Spleen (tissue), 13 donors: ENCODE measurements at regions of chr10 and their contacts with region 1.

Region 1: GRCh38 chr10:28663576-28664313 is 13.6 kb upstream of the BAMBI start:
- DNase-seq: peak; percentile 90
- H3K4me3 ChIP-seq: no peak overlapping the region
- H3K27ac ChIP-seq: no peak overlapping the region
- H3K4me1 ChIP-seq: peaks cover 0 to 23% (median 12%) of the 10 kb centered on the region in 6 donors
- H3K27me3 ChIP-seq: peaks cover 0 to 49% (median 19%) of the 10 kb centered on the region in 7 donors
- CTCF ChIP-seq: peak; percentile 70 to 97 (median 91)
- POLR2A ChIP-seq: no peak

Region 2: GRCh38 chr10:28875549-28876081 is 211.9 kb after region 1 on chr10:
- intact Hi-C with region 1: no loop called
- DNase-seq: no peak
- H3K4me3 ChIP-seq: no peak overlapping the region
- H3K27ac ChIP-seq: no peak overlapping the region
- H3K4me1 ChIP-seq: peaks cover 0 to 10% (median 5%) of the 10 kb centered on the region in 6 donors
- H3K27me3 ChIP-seq: no peaks in the 10 kb centered on the region
- CTCF ChIP-seq: no peak
- POLR2A ChIP-seq: no peak

Region 3: DNA sequence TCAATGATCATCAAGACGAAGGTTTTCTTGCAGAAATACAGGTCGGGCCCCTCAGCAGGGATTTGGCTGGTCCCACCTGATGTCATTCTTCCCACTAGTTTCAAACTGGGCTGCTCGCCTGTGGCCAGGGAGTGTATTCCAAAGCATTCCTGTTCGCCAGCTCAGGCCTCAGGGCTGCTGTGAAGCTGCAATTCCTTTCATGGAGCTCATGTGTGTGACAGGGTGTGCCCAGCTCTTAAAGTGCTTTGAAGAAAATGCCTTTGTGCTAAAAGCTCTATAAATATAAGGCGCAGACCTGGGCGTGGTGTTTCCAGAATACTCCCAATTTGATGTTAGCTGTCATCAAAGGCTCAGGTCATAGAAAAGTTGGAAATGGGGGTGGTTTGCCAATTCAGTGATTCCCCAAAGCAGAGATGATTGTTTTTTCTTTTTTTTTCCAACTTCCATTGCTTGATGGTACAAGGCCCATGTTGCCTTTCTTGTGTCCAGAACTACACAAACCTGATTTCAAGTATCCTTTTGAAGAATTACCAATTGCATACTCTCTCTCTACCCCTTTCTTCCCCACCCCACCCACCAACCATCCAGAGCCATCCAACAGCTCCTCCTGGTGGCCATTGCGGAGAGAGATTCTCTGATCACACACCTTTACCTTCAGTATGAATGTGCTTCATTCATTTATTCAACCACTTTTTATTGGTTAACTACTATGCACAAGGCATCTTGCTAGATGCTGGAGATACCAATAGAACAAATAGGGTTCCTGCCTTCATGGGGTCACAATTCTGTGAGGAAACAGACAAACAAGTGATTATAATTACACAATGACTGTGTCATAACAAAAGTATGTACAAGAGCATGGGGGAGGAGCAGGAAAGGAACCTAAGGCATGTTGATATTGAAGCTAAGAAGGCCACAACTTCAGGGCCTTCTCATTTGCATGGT is 327.9 kb after region 1 on chr10:
- intact Hi-C with region 1: loop called (anchors 5 kb)
- DNase-seq: no peak
- H3K4me3 ChIP-seq: no peak overlapping the region
- H3K27ac ChIP-seq: no peak overlapping the region
- H3K4me1 ChIP-seq: no peaks in the 10 kb centered on the region
- H3K27me3 ChIP-seq: no peaks in the 10 kb centered on the region
- CTCF ChIP-seq: peak in 9 of 11 experiments; percentile 35 to 67 (median 52)
- POLR2A ChIP-seq: no peak

Region 4: GRCh38 chr10:29304264-29305030 is 640.7 kb after region 1 on chr10:
- intact Hi-C with region 1: loop called (anchors 5 kb)
- DNase-seq: no peak
- H3K4me3 ChIP-seq: peak overlapping the region in 1 of 8 donors; percentile 27
- H3K27ac ChIP-seq: peak overlapping the region in 3 of 8 donors; percentile 20 to 49 (median 23)
- H3K4me1 ChIP-seq: peaks cover 0 to 5% (median 0%) of the 10 kb centered on the region in 6 donors
- H3K27me3 ChIP-seq: peaks cover 0 to 13% (median 0%) of the 10 kb centered on the region in 7 donors
- CTCF ChIP-seq: peak; percentile 25 to 81 (median 72)
- POLR2A ChIP-seq: no peak